HepG2 (cell line): ENCODE measurements at regions of chr1 and their contacts with region 1.

Region 1: DNA sequence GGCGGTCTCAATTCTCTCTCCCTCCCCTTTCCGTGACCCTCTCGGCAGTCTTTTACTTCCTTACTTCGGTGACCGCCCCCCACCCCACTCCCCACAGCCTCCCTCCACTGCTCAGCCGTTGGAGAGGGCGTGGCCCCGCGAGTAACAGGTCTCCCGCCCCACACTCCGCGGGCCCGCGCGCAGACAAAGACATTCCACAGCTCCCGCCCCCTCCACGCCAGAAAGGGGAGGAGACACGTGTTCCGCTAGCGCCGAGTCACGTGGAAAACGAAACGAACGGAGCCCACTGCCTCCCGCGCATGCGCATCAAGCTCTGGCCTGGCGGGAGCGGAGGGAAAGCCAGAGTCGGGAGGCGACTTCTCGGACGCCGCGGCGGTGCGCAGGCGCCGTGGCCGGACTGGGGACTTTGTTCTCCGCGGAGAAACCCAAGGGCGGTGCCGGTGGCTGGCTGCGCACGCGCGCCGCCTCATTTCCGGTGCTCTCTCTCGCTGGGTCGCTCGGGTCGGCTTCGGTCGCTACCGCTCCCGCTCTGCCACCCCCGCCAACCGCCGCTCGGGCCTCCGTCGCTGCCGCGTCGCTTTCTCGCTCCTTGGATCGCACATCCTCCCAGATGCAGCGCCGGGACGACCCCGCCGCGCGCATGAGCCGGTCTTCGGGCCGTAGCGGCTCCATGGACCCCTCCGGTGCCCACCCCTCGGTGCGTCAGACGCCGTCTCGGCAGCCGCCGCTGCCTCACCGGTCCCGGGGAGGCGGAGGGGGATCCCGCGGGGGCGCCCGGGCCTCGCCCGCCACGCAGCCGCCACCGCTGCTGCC is at the start of gene KHDRBS1:
- DNase-seq: peak; percentile 96
- ATAC-seq: peak; percentile 88
- H3K4me3 ChIP-seq: peak within 1 kb of the TSS; percentile 62 to 100 (median 98)
- H3K27ac ChIP-seq: peak within 1 kb of the TSS; percentile 84
- H3K4me1 ChIP-seq: peaks cover 27% of the 10 kb centered on the region
- H3K27me3 ChIP-seq: no peaks in the 10 kb centered on the region; a peak in 1 of 5 replicates
- CTCF ChIP-seq: no peak
- EP300 ChIP-seq: peak in 1 of 2 experiments; percentile 7; a peak in 2 of 4 replicates
- POLR2A ChIP-seq: peak; percentile 82 to 90
- RAD21 ChIP-seq: no peak
- total RNA-seq, gene KHDRBS1: 39.0 and 86.8 TPM in 2 replicates

Region 2: DNA sequence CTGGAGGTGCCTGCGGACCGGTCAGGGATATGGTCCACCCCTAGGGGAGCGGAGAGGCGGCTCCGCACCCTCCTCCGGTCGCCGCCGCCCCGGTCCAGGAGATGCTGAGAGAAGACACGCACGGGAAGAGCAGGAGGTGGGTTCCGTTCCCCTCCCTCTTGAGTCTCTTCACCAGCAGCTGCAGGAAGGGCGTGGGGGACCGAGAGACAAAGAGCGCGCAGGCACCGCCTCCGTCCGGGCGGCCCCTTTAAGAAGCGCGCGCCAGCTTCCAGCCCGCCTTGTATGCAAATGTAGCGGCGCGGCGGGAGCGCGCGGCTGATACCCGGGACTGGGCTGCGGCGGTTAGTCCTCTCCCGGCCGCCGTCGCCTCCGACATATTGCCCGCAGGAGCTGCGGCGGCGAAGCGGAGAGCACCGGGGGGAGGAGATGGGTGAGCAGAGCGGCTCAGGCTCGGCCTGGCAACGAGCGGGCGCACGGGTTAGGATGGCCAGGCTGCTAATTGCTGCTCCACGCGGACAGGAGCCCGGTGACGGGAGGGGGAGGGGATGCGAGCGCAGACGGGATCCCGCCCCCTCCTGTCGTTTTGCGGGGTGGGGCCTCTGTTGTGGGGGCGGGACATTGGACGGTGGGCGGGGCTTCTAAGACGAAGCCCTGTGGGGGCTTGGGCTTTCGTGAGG is 59.2 kb after region 1 on chr1 and contains the start of gene TMEM39B:
- CTCF ChIA-PET with region 1: no interaction called
- POLR2A ChIA-PET with region 1: interaction called, 14 read pairs
- in situ Hi-C with region 1: no loop called
- intact Hi-C with region 1: no loop called
- DNase-seq: peak; percentile 85
- ATAC-seq: peak; percentile 86
- H3K4me3 ChIP-seq: peak within 1 kb of the TSS; percentile 81 to 91 (median 81)
- H3K27ac ChIP-seq: peak within 1 kb of the TSS; percentile 61
- H3K4me1 ChIP-seq: peaks cover 46% of the 10 kb centered on the region
- H3K27me3 ChIP-seq: no peaks in the 10 kb centered on the region; a peak in 1 of 5 replicates
- CTCF ChIP-seq: no peak; the same call in 1 of the 2 replicates
- EP300 ChIP-seq: no peak
- POLR2A ChIP-seq: peak; percentile 63 to 67
- RAD21 ChIP-seq: 0 out of 2 replicates have a peak, but pooled peaks have one; percentile 30
- total RNA-seq, gene TMEM39B: 3.1 and 4.9 TPM in 2 replicates

Region 3: DNA sequence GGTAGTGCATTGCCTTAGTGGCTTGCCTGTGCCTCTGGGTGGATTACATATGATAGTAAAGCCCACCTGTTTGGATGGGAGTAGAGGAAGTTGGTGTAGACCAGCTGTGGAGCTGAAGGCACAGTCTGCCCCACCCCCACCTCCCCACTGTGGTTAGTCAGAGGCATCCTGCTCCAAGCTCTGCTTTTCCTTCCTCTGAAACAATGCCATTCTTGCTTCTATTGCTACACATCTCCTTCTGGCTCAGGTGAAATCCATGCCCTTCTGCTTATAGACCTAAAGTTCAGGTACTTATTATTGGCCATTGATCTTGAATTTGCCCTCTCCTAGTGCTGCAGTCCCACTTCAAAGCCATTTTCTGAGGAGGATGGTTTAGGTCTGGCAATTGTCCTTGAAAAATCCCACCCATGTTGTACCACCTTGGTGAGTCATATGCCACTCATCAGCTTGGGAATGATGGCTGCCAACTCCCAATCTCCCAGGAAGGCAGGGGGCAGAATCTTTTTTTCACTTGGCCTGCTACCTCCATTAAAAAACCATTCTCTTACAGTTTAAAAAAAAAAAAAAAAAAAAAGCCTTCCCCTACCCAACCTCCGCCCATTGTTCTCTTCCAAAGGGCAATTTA is 159.1 kb after region 1 on chr1:
- CTCF ChIA-PET with region 1: no interaction called
- POLR2A ChIA-PET with region 1: no interaction called
- in situ Hi-C with region 1: no loop called
- intact Hi-C with region 1: no loop called
- DNase-seq: no peak
- ATAC-seq: no peak
- H3K4me3 ChIP-seq: no peak overlapping the region
- H3K27ac ChIP-seq: no peak overlapping the region
- H3K4me1 ChIP-seq: peaks cover 10% of the 10 kb centered on the region
- H3K27me3 ChIP-seq: no peaks in the 10 kb centered on the region
- CTCF ChIP-seq: no peak
- EP300 ChIP-seq: no peak
- POLR2A ChIP-seq: no peak
- RAD21 ChIP-seq: no peak

Region 4: DNA sequence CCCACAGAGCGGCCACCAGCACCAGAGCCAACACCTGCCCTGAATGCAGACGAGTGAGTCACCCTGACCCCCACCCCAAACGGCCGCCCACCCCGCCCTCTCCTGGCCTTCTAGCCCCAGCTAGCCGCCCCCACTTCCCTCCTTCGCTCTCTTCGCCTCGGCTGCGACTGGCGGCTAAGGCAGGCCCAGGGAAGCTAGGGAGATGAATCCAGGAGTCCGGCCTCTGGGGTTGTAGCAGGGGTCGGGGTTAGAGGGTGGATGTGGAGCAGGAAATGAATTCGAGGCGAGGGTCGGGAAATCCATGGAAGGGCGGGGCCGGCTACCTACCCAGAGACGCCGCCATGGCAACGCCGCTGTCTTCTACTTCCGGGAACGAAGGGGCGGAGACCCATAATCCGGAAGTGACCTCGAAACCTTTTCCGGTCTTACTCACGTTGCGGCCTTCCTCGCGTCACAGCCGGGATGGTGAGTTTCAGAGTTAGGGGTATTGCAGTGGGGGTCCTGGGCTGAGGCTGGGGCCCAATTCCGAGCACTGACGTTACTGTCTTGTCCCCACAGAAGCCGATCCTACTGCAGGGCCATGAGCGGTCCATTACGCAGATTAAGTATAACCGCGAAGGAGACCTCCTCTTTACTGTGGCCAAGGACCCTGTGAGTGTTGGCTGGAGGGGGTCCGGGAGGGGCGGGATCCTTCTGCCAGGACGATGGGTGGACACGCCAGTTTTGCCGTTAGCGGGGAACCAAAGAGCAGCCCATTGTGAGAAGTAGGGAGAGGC is 208.6 kb after region 1 on chr1 and contains the starts of genes EIF3I and TMEM234:
- CTCF ChIA-PET with region 1: no interaction called
- POLR2A ChIA-PET with region 1: no interaction called
- in situ Hi-C with region 1: no loop called
- intact Hi-C with region 1: no loop called
- DNase-seq: peak; percentile 88
- ATAC-seq: peak; percentile 95
- H3K4me3 ChIP-seq: peak within 1 kb of the TSS; percentile 82 to 89 (median 85)
- H3K27ac ChIP-seq: peak within 1 kb of the TSS; percentile 69
- H3K4me1 ChIP-seq: peaks cover 29% of the 10 kb centered on the region
- H3K27me3 ChIP-seq: no peaks in the 10 kb centered on the region; a peak in 2 of 5 replicates
- CTCF ChIP-seq: no peak
- EP300 ChIP-seq: no peak
- POLR2A ChIP-seq: peak; percentile 73 to 77
- RAD21 ChIP-seq: no peak
- total RNA-seq, gene EIF3I: 223 and 286 TPM in 2 replicates
- total RNA-seq, gene TMEM234: 4.2 and 9.0 TPM in 2 replicates